Cardiac septum (tissue), 1 donor: ENCODE measurements at regions of chr20 and their contacts with region 1.

Region 1: GRCh38 chr20:50153485-50154377 is at the start of gene PEDS1:
- DNase-seq: peak; percentile 95
- total RNA-seq, gene PEDS1: 15.2 TPM

Region 2: DNA sequence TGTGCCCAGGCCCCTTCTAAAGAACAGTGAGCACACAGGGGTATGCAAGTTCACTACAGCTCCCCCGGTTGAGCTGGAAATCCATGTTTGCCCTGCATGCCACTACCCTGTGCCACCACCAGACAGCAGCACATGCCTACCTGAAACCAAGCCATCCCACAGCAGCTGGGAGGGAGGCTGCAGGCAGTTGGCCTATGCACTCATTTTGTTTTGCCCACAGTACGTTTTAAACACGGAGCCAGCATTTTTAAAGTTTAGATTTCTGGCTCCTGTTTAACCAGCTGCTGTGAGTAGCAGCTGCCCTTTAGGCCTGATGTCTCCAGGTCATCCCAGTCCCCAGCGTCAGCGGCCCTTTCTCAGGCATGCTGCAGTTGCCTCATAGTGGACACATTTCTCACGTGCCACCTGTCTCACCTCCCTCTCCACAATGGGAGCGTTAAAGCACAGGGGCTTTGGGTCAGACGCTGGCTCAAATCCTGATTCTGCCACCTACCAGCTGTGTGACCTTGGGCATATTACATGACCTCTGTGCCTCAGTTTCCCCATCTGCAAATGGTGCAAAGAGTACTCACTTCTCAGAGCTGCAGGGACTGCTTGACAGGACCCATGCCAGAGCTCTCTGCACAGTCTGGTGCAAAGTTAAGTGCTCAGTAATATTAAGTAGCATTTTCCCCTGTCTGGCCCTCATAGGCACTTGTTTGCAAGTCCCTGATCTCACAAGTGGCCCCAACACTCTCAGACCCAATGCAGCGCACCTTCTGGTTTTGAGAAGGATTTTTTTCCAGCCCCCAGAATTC is 32.6 kb before region 1 on chr20:
- intact Hi-C with region 1: loop called (anchors 2 kb)
- DNase-seq: no peak

Region 3: DNA sequence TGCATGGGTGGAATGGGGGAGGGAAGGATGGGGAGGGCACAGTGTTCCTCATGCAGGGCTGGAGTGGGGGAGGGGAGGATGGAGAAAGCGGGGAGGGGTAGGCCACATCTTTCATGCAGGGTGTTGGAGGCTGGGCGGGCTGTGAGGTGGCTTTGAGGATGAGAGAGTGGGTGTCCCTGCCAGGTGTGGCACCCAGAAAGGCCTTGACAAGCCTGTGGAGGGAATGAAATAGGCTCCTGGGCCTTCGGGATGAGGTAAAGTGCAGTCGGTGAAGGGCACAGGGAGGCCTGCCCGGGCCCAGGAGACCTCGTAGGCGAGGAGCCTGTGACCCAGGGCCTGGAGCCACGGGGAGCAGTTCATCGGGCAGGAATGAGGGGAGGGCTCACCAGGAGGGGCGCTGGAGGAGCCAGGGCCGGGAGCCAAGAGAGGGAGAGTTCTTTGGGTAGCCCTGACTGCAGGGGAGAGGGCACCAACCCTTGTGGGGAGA is 44.5 kb after region 1 on chr20:
- intact Hi-C with region 1: no loop called
- DNase-seq: no peak